Mammary epithelial cell (primary cell): ENCODE measurements at regions of chr15 and their contacts with region 1.

Region 1: GRCh38 chr15:39171944-39172368 is 408.9 kb upstream of the THBS1 start:
- DNase-seq: peak; percentile 97
- H3K4me3 ChIP-seq: no peak overlapping the region
- H3K27ac ChIP-seq: peak overlapping the region; percentile 95
- H3K4me1 ChIP-seq: peaks cover 33% of the 10 kb centered on the region
- H3K27me3 ChIP-seq: no peaks in the 10 kb centered on the region
- CTCF ChIP-seq: peak; percentile 37 to 67

Region 2: DNA sequence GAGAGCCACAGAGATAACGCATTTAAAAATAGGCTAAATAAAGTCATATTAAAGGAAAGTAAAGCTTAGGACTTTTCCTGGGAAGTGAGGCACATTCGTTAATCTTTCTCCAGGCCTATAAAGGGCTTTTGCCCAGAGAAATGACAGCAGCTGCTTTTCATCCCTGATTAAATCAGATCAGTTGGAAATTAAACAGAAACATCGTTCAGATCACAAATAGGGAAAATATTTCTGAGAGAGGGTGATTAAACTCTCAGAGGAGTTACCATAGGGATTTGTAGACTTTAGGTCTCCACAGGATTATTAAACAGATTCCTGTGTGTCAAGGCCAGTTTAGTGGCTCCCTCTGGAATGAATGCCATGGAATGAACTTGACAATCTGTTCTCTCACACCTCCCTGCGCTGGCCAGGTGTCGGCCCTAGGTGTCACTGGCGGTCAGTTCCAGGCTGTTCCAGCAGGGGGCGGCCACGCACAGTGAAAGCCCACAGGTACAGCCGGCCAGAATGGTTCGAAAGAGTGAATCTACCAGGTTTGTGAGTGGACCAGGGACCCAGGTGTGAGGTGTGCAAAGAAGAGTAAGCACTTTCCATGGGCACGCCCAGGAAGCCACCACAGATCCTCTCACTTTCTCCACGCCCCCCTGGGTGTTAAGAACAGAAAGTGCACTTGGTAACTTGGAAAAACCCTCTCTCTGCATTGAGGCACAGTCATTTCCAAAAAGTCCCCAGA is 354.4 kb before region 1 on chr15:
- CTCF ChIA-PET with region 1: no interaction called
- dilution Hi-C with region 1: no loop called
- in situ Hi-C with region 1: loop called in 1 of 2 experiments (anchors 25 kb)
- intact Hi-C with region 1: loop called (anchors 1 kb)
- DNase-seq: peak; percentile 81
- H3K4me3 ChIP-seq: no peak overlapping the region
- H3K27ac ChIP-seq: no peak overlapping the region
- H3K4me1 ChIP-seq: peaks cover 6% of the 10 kb centered on the region
- H3K27me3 ChIP-seq: no peaks in the 10 kb centered on the region
- CTCF ChIP-seq: peak; percentile 99 to 100

Region 3: DNA sequence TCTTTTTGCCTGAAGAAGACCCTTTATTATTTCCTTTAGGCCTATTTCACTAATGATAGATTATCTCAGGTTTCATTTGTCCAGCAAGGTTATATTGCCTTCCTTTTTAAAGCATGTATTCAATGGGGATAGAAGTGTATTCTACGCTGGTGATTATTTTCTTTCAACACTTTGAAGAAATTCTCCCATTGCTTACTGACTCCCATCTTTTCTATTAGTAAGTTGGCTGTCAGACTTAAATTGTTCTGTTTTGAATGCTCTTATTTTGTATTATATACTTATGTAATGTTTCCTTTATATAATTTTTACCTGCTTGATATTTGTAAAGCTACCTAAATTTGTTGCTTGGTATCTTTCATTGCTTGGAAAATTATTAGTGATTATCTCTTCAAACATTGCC is 162.2 kb before region 1 on chr15:
- CTCF ChIA-PET with region 1: no interaction called
- dilution Hi-C with region 1: no loop called
- in situ Hi-C with region 1: no loop called
- intact Hi-C with region 1: no loop called
- DNase-seq: no peak
- H3K4me3 ChIP-seq: no peak overlapping the region
- H3K27ac ChIP-seq: no peak overlapping the region
- H3K4me1 ChIP-seq: no peaks in the 10 kb centered on the region
- H3K27me3 ChIP-seq: no peaks in the 10 kb centered on the region
- CTCF ChIP-seq: no peak

Region 4: DNA sequence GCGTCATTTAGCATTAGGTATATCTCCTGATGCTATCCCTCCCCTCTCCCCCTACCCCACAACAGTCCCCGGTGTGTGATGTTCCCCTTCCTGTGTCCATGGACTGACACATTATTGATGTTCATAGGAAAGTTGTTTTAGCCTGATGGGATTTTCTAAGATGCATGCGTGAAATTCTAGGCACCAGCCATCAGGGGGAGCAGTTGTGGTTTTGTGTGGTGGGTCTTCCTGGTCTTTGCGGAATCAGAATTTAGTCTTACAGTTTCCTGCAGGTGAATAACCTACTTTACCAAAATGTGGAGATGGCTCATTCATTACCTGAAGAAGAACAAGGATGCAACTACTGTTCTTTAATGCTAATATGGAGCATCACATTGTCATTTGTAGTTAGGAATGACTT is 46.1 kb before region 1 on chr15:
- CTCF ChIA-PET with region 1: no interaction called
- dilution Hi-C with region 1: no loop called
- in situ Hi-C with region 1: no loop called
- intact Hi-C with region 1: no loop called
- DNase-seq: no peak
- H3K4me3 ChIP-seq: no peak overlapping the region
- H3K27ac ChIP-seq: no peak overlapping the region
- H3K4me1 ChIP-seq: peaks cover 60% of the 10 kb centered on the region
- H3K27me3 ChIP-seq: no peaks in the 10 kb centered on the region
- CTCF ChIP-seq: peak; percentile 63 to 77

Region 5: GRCh38 chr15:39154227-39154638 is 17.7 kb before region 1 on chr15:
- CTCF ChIA-PET with region 1: no interaction called
- dilution Hi-C with region 1: no loop called
- in situ Hi-C with region 1: no loop called
- intact Hi-C with region 1: no loop called
- DNase-seq: no peak
- H3K4me3 ChIP-seq: no peak overlapping the region
- H3K27ac ChIP-seq: no peak overlapping the region
- H3K4me1 ChIP-seq: no peaks in the 10 kb centered on the region
- H3K27me3 ChIP-seq: no peaks in the 10 kb centered on the region
- CTCF ChIP-seq: peak; percentile 38 to 47

Region 6: DNA sequence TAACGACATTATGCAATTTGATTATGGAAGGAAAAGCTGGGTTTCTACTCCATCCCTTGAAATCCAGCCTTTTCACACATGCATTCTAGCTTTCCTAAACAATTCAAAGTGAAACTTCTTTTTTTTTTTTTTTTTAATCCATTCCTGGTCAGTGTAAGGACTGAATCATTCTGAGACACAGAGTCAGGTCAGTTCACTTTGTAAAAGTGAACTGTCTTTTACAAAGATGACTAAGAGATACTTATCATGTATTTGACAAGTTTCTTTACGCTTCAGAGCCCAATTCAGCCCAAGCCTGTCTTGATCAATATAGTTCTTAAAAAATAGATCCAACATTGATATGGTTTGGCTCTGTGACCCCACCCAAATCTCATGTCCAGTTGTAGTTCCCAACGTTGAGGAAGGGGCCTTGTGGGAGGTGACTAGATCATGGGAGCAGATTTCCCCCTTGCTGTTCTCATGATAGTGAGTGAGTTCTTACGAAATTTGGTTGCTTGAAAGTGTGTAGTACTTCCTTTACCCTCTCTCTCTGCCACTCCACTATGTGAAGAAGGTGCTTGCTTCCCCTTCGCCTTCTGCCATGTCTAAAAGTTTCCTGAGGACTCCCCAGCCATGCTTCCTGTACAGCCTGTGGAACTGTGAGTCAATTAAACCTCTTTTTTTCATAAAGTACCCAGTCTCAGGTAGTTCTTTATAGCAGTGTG is 63.3 kb after region 1 on chr15:
- CTCF ChIA-PET with region 1: no interaction called
- dilution Hi-C with region 1: no loop called
- in situ Hi-C with region 1: no loop called
- intact Hi-C with region 1: loop called (anchors 2 kb)
- DNase-seq: peak; percentile 89
- H3K4me3 ChIP-seq: no peak overlapping the region
- H3K27ac ChIP-seq: peak overlapping the region; percentile 88
- H3K4me1 ChIP-seq: peaks cover 64% of the 10 kb centered on the region
- H3K27me3 ChIP-seq: no peaks in the 10 kb centered on the region
- CTCF ChIP-seq: no peak

Region 7: GRCh38 chr15:39283531-39283930 is 111.6 kb after region 1 on chr15:
- CTCF ChIA-PET with region 1: no interaction called
- dilution Hi-C with region 1: no loop called
- in situ Hi-C with region 1: no loop called
- intact Hi-C with region 1: no loop called
- DNase-seq: no peak
- H3K4me3 ChIP-seq: no peak overlapping the region
- H3K27ac ChIP-seq: peak overlapping the region; percentile 1
- H3K4me1 ChIP-seq: peaks cover 35% of the 10 kb centered on the region
- H3K27me3 ChIP-seq: no peaks in the 10 kb centered on the region
- CTCF ChIP-seq: no peak

Region 8: DNA sequence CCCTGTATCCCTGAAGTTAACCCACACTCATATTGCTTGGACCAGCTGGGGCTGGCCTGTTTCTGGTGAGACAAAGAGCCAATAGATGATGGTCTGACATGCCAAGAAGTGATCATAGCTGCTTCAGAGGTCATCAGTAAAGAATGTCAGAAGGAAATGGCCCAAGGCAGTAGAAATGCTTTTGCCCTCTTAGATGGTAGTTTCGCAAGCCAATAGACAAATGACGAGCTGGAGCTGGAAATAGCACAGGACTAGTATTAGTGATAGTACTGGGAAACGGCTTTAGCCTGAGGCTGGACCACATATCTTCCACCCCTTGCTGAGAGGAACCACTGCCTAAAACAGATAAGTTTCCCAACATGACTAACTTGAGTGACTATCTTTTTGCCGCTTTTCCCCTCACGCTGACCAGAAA is 232.8 kb after region 1 on chr15:
- CTCF ChIA-PET with region 1: interaction called, 3 read pairs
- dilution Hi-C with region 1: no loop called
- in situ Hi-C with region 1: no loop called
- intact Hi-C with region 1: loop called (anchors 1 kb)
- DNase-seq: peak; percentile 98
- H3K4me3 ChIP-seq: no peak overlapping the region
- H3K27ac ChIP-seq: peak overlapping the region; percentile 56
- H3K4me1 ChIP-seq: peaks cover 32% of the 10 kb centered on the region
- H3K27me3 ChIP-seq: no peaks in the 10 kb centered on the region
- CTCF ChIP-seq: no peak

Region 9: GRCh38 chr15:39686000-39686613 is 514.2 kb after region 1 on chr15:
- CTCF ChIA-PET with region 1: no interaction called
- dilution Hi-C with region 1: no loop called
- in situ Hi-C with region 1: no loop called
- intact Hi-C with region 1: loop called (anchors 1 kb)
- DNase-seq: peak; percentile 36
- H3K4me3 ChIP-seq: no peak overlapping the region
- H3K27ac ChIP-seq: no peak overlapping the region
- H3K4me1 ChIP-seq: no peaks in the 10 kb centered on the region
- H3K27me3 ChIP-seq: no peaks in the 10 kb centered on the region
- CTCF ChIP-seq: peak; percentile 70 to 71